CD8-positive, alpha-beta T cell (primary cell): ENCODE measurements at regions of chr1 and their contacts with region 1.

Region 1: DNA sequence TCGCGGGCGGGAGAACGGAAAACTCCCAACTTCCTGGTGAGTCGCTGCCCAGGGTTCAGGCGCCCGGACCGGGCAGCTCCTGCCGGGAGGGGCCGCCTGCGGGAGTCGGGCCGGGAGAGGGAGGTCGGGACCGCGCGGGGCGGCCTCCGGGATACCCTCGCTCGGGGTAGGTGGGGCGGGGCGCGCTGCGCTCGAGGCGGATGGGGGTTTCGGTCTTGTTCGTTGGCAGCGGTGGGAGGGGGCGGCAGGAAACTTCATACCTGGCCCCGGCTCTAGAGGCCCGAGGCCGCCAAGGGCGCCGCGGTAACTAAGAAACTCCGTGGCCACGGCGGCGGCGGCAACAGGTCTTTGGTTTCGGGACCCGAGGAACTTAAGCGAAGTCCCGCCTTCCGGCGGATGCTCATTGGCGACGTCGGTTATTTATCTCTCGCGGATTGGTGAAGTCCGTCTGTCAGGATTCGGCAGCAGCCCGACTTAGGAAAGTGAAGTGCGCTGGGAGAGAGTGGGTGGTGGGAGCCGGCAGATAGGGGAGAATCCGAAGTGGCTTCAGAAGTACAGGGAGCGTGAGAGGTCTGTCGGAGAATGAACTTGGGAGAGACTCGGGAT is 546 bp downstream of the NEK7 start:
- DNase-seq: peak; percentile 51 to 92 (median 82)
- ATAC-seq: peak; percentile 43
- H3K4me3 ChIP-seq: peak overlapping the region; percentile 67 to 86
- H3K4me3 Mint-ChIP-seq: peak overlapping the region; percentile 99
- H3K27ac ChIP-seq: peak overlapping the region; percentile 85 to 88
- H3K27ac Mint-ChIP-seq: peak overlapping the region; percentile 100
- H3K4me1 ChIP-seq: peaks cover 31% of the 10 kb centered on the region
- H3K4me1 Mint-ChIP-seq: peaks cover 41% of the 10 kb centered on the region
- H3K27me3 ChIP-seq: no peaks in the 10 kb centered on the region
- H3K27me3 Mint-ChIP-seq: no peaks in the 10 kb centered on the region
- CTCF ChIP-seq: no peak

Region 2: GRCh38 chr1:197062692-197063091 is 1094.7 kb before region 1 on chr1:
- CTCF ChIA-PET with region 1: no interaction called
- POLR2A ChIA-PET with region 1: no interaction called
- intact Hi-C with region 1: no loop called
- DNase-seq: no peak
- ATAC-seq: no peak
- H3K4me3 ChIP-seq: no peak overlapping the region
- H3K4me3 Mint-ChIP-seq: no peak overlapping the region
- H3K27ac ChIP-seq: no peak overlapping the region
- H3K27ac Mint-ChIP-seq: no peak overlapping the region
- H3K4me1 ChIP-seq: no peaks in the 10 kb centered on the region
- H3K4me1 Mint-ChIP-seq: no peaks in the 10 kb centered on the region
- H3K27me3 ChIP-seq: no peaks in the 10 kb centered on the region
- H3K27me3 Mint-ChIP-seq: peaks cover 8% of the 10 kb centered on the region
- CTCF ChIP-seq: no peak

Region 3: GRCh38 chr1:197775282-197776262 is 381.8 kb before region 1 on chr1 and contains the start of gene DENND1B:
- CTCF ChIA-PET with region 1: no interaction called
- POLR2A ChIA-PET with region 1: no interaction called
- intact Hi-C with region 1: loop called (anchors 1 to 5 kb)
- DNase-seq: peak; percentile 56 to 90 (median 83)
- ATAC-seq: peak; percentile 55
- H3K4me3 ChIP-seq: peak within 1 kb of the TSS; percentile 62 to 71
- H3K4me3 Mint-ChIP-seq: peak within 1 kb of the TSS; percentile 83
- H3K27ac ChIP-seq: peak within 1 kb of the TSS; percentile 61 to 88
- H3K27ac Mint-ChIP-seq: peak within 1 kb of the TSS; percentile 97
- H3K4me1 ChIP-seq: peaks cover 33% of the 10 kb centered on the region
- H3K4me1 Mint-ChIP-seq: peaks cover 66% of the 10 kb centered on the region
- H3K27me3 ChIP-seq: no peaks in the 10 kb centered on the region
- H3K27me3 Mint-ChIP-seq: no peaks in the 10 kb centered on the region
- CTCF ChIP-seq: no peak
- total RNA-seq, gene DENND1B: 17.6 to 19.6 TPM

Region 4: DNA sequence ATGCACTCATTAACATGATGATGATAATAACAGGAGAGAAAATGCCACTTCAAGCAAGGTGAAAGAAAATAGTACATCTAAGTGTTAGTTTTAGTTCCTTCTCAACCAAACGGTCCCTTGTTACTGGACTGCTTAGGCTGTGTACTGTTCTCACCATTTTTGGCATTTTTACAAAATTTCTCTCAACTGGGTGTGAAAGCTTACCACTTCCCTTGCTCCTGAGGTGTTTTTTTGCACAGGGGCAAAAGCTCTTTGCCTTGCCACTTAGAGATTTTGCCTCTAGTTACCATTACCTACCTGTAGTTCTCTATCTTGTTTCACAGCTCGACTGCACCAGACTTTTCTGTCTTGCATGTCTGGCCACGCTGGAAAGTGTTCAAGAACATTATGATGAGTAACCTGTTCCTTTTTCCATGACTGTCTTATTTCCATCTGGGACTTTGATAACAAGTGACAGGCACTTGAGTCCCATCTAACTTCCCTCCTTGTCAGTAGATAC is 10.1 kb after region 1 on chr1:
- CTCF ChIA-PET with region 1: interaction called, 12 read pairs
- POLR2A ChIA-PET with region 1: interaction called, 16 read pairs
- intact Hi-C with region 1: loop called (anchors 1 to 2 kb)
- DNase-seq: peak in 6 of 9 experiments; percentile 41 to 89 (median 60)
- ATAC-seq: peak; percentile 67
- H3K4me3 ChIP-seq: peak overlapping the region in 1 of 2 experiments; percentile 12
- H3K4me3 Mint-ChIP-seq: peak overlapping the region; percentile 73
- H3K27ac ChIP-seq: peak overlapping the region; percentile 31 to 84
- H3K27ac Mint-ChIP-seq: peak overlapping the region; percentile 97
- H3K4me1 ChIP-seq: peaks cover 93% of the 10 kb centered on the region
- H3K4me1 Mint-ChIP-seq: peaks cover 92% of the 10 kb centered on the region
- H3K27me3 ChIP-seq: no peaks in the 10 kb centered on the region
- H3K27me3 Mint-ChIP-seq: no peaks in the 10 kb centered on the region
- CTCF ChIP-seq: no peak

Region 5: GRCh38 chr1:198199105-198199504 is 41.8 kb after region 1 on chr1:
- CTCF ChIA-PET with region 1: interaction called, 5 read pairs
- POLR2A ChIA-PET with region 1: interaction called, 3 read pairs
- intact Hi-C with region 1: loop called in 1 of 2 experiments (anchors 10 kb)
- DNase-seq: no peak
- ATAC-seq: no peak
- H3K4me3 ChIP-seq: no peak overlapping the region
- H3K4me3 Mint-ChIP-seq: no peak overlapping the region
- H3K27ac ChIP-seq: no peak overlapping the region
- H3K27ac Mint-ChIP-seq: peak overlapping the region; percentile 1
- H3K4me1 ChIP-seq: peaks cover 34% of the 10 kb centered on the region
- H3K4me1 Mint-ChIP-seq: peaks cover 83% of the 10 kb centered on the region
- H3K27me3 ChIP-seq: no peaks in the 10 kb centered on the region
- H3K27me3 Mint-ChIP-seq: no peaks in the 10 kb centered on the region
- CTCF ChIP-seq: no peak

Region 6: GRCh38 chr1:198520524-198521254 is 363.3 kb after region 1 on chr1:
- CTCF ChIA-PET with region 1: no interaction called
- POLR2A ChIA-PET with region 1: no interaction called
- intact Hi-C with region 1: loop called in 1 of 2 experiments (anchors 5 kb)
- DNase-seq: peak in 2 of 9 experiments; percentile 57 to 73
- ATAC-seq: peak; percentile 57
- H3K4me3 ChIP-seq: peak overlapping the region; percentile 11 to 30
- H3K4me3 Mint-ChIP-seq: peak overlapping the region; percentile 72
- H3K27ac ChIP-seq: peak overlapping the region; percentile 6 to 75
- H3K27ac Mint-ChIP-seq: peak overlapping the region; percentile 89
- H3K4me1 ChIP-seq: peaks cover 58% of the 10 kb centered on the region
- H3K4me1 Mint-ChIP-seq: peaks cover 72% of the 10 kb centered on the region
- H3K27me3 ChIP-seq: no peaks in the 10 kb centered on the region
- H3K27me3 Mint-ChIP-seq: no peaks in the 10 kb centered on the region
- CTCF ChIP-seq: no peak

Region 7: GRCh38 chr1:198937231-198938031 is 780.1 kb after region 1 on chr1:
- CTCF ChIA-PET with region 1: no interaction called
- POLR2A ChIA-PET with region 1: no interaction called
- intact Hi-C with region 1: loop called (anchors 5 to 10 kb)
- DNase-seq: peak in 8 of 9 experiments; percentile 15 to 86 (median 33)
- ATAC-seq: peak; percentile 84
- H3K4me3 ChIP-seq: peak overlapping the region; percentile 42 to 59
- H3K4me3 Mint-ChIP-seq: peak overlapping the region; percentile 87
- H3K27ac ChIP-seq: peak overlapping the region; percentile 39 to 60
- H3K27ac Mint-ChIP-seq: peak overlapping the region; percentile 91
- H3K4me1 ChIP-seq: peaks cover 28% of the 10 kb centered on the region
- H3K4me1 Mint-ChIP-seq: peaks cover 25% of the 10 kb centered on the region
- H3K27me3 ChIP-seq: no peaks in the 10 kb centered on the region
- H3K27me3 Mint-ChIP-seq: no peaks in the 10 kb centered on the region
- CTCF ChIP-seq: no peak